ENCODE measurements at regions of chr5 and their contacts with region 1.

Region 1: GRCh38 chr5:101390151-101390908 is 487.2 kb upstream of the ST8SIA4 start:
- DNase-seq: peak; percentile 10
- H3K4me3 Mint-ChIP-seq: no peak overlapping the region
- H3K27ac Mint-ChIP-seq: no peak overlapping the region
- H3K4me1 Mint-ChIP-seq: no peaks in the 10 kb centered on the region
- H3K27me3 Mint-ChIP-seq: no peaks in the 10 kb centered on the region

Region 2: GRCh38 chr5:100430268-100431195 is 959.8 kb before region 1 on chr5:
- CTCF ChIA-PET with region 1: interaction called, 8 read pairs
- intact Hi-C with region 1: loop called (anchors 2 kb)
- DNase-seq: peak; percentile 65
- H3K4me3 Mint-ChIP-seq: no peak overlapping the region
- H3K27ac Mint-ChIP-seq: no peak overlapping the region
- H3K4me1 Mint-ChIP-seq: no peaks in the 10 kb centered on the region
- H3K27me3 Mint-ChIP-seq: no peaks in the 10 kb centered on the region

Region 3: DNA sequence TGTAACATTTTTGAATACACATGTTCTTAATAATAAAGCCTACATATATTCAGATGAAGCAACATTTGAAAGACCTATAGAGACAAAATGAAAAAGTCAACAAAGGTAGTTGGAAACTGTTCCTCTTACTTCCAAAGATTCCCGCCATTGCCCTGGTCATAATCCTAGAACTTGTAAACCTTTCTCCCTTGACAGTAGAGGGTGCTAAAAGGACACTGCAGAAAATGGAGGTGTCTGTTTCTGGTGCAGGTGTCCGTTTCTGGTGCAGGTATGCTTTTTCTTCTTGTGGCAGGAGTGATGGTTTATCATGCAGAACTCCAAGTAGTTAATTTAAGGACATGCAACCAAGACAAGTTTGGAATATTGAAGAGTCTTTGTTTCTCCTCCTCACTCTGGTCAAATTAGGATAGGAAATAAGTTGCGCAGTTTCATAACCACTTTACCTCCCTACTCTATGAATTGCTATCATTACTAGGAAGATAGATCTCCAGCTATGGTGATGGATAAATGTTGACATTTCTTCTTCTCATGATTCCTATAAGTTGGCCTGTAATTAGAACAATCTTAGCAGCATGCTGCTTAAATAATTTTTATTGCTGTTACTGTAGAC is 911.1 kb before region 1 on chr5:
- CTCF ChIA-PET with region 1: interaction called, 4 read pairs
- intact Hi-C with region 1: loop called (anchors 1 kb)
- DNase-seq: peak; percentile 4
- H3K4me3 Mint-ChIP-seq: no peak overlapping the region
- H3K27ac Mint-ChIP-seq: no peak overlapping the region
- H3K4me1 Mint-ChIP-seq: no peaks in the 10 kb centered on the region
- H3K27me3 Mint-ChIP-seq: no peaks in the 10 kb centered on the region

Region 4: DNA sequence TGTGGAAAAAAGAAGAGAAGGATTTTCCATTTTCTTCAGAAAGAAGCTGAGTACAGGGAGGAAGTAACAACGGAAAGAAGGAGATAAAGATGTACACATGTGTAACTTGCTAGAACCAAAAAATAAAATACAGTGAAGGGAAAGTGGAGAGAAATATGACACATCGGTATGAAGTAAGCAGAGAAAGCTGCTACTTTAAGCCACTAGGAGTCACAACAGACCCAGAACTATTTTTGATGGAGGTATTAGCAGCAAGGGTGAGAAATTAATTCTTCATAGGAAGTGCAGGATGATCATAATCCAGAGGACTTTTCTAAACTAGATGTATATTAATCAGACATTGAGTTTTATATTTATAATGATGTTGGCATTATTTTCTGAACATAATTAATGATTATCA is 766.6 kb before region 1 on chr5:
- CTCF ChIA-PET with region 1: no interaction called
- intact Hi-C with region 1: loop called (anchors 1 kb)
- DNase-seq: no peak
- H3K4me3 Mint-ChIP-seq: no peak overlapping the region
- H3K27ac Mint-ChIP-seq: no peak overlapping the region
- H3K4me1 Mint-ChIP-seq: no peaks in the 10 kb centered on the region
- H3K27me3 Mint-ChIP-seq: no peaks in the 10 kb centered on the region

Region 5: GRCh38 chr5:101067429-101067828 is 322.9 kb before region 1 on chr5:
- CTCF ChIA-PET with region 1: no interaction called
- intact Hi-C with region 1: loop called (anchors 10 kb)
- DNase-seq: no peak
- H3K4me3 Mint-ChIP-seq: no peak overlapping the region
- H3K27ac Mint-ChIP-seq: no peak overlapping the region
- H3K4me1 Mint-ChIP-seq: no peaks in the 10 kb centered on the region
- H3K27me3 Mint-ChIP-seq: no peaks in the 10 kb centered on the region

Region 6: GRCh38 chr5:101678481-101679193 is 288.3 kb after region 1 on chr5:
- CTCF ChIA-PET with region 1: no interaction called
- intact Hi-C with region 1: loop called (anchors 10 kb)
- DNase-seq: peak; percentile 51
- H3K4me3 Mint-ChIP-seq: no peak overlapping the region
- H3K27ac Mint-ChIP-seq: no peak overlapping the region
- H3K4me1 Mint-ChIP-seq: no peaks in the 10 kb centered on the region
- H3K27me3 Mint-ChIP-seq: peaks cover 2% of the 10 kb centered on the region

Region 7: DNA sequence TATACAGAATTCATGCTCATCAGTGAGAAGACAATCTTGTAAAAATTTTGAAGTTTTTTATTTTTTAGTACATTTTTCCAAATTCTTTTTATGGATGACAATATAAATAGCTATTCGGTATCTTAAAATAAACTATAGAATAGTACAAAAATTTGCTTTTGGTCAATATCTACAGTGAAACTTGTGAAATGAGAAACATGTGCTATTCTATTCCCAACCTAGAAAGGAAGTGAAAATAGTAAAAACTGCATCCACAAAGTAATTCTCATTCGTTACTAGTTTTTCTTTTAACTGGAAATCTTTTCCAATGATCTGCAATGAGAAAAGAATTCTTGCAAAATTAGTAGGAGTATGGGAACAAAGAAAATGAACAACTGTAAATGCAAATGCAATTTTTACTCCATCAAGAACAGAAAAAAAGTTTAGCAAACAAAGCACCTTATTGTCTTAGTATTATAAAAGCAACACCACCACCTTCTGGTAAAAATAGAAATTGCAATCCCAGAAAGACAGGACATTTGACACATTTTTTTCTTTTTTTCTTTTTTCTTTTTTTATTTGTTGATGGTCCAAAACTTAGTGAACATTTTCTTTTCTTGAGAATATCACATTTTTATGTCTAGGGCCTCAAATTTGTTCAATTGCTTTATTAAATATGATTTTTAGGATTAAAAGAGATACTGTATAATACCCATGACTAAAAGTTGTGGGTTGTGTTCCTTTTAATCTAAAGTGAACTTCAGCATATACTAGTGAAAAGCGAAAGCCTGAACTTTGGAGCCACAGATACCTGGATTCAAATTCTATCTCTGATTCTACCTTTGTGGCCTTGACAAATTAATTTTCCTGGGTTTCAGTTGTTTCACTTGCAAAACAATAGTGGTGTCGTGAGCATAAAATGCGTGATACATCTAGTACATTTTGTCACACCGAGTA is 833.5 kb after region 1 on chr5:
- CTCF ChIA-PET with region 1: no interaction called
- intact Hi-C with region 1: loop called (anchors 10 kb)
- DNase-seq: no peak
- H3K4me3 Mint-ChIP-seq: no peak overlapping the region
- H3K27ac Mint-ChIP-seq: no peak overlapping the region
- H3K4me1 Mint-ChIP-seq: no peaks in the 10 kb centered on the region
- H3K27me3 Mint-ChIP-seq: peaks cover 4% of the 10 kb centered on the region

Measured in activated naive CD4-positive, alpha-beta T cell treated with anti-CD3 and anti-CD28 coated beads for 36 hours (primary cell).